Panc1 (cell line): ENCODE measurements at regions of chr3 and their contacts with region 1.

Region 1: DNA sequence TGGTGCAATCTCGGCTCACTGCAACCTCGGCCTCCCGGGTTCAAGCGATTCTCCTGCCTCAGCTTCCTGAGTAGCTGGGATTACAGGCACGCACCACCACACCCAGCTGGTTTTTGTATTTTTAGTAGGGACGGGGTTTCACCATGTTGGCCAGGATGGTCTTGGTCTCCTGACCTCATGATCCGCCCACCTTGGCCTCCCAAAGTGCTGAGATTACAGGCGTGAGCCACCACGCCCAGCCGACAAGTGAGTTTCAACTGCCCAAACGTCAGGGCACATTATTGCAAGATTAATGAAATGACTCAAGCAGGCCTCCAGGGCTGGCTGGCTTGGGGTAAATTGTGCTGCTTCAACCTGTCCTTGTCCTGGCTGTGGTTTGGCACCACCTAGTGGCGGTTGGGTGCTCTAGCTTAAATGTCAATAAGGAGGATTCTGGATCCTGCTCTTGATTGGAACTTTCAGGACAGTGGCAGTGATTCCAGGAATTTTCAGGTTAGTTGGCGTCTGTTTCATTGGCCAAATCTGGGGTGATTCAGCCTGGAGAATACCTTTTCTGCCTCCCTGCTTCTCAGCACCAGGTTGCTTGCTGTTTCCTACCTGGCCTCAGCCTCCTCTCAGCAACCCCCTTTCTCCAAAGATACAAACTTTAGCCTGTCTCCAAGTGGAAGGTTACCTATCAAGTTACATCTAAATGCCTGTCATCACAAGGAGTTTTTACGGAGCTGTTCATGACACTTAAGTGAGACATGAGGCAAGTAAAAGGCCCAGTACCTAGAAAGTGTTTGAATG is 32.4 kb upstream of the SACM1L start:
- DNase-seq: peak; percentile 74
- ATAC-seq: peak; percentile 89
- H3K4me3 ChIP-seq: no peak overlapping the region
- H3K27ac ChIP-seq: no peak overlapping the region; the same call in 1 of the 2 replicates
- H3K4me1 ChIP-seq: peaks cover 14% of the 10 kb centered on the region
- H3K27me3 ChIP-seq: no peaks in the 10 kb centered on the region
- CTCF ChIP-seq: peak; percentile 87

Region 2: GRCh38 chr3:45037734-45038455 is 618.9 kb before region 1 on chr3:
- CTCF ChIA-PET with region 1: interaction called, 6 read pairs
- POLR2A ChIA-PET with region 1: no interaction called
- in situ Hi-C with region 1: no loop called
- intact Hi-C with region 1: loop called (anchors 10 kb)
- DNase-seq: peak; percentile 90
- ATAC-seq: peak; percentile 93
- H3K4me3 ChIP-seq: peak overlapping the region; percentile 12 to 27; a peak in 2 of 4 replicates
- H3K27ac ChIP-seq: no peak overlapping the region
- H3K4me1 ChIP-seq: no peaks in the 10 kb centered on the region
- H3K27me3 ChIP-seq: no peaks in the 10 kb centered on the region
- CTCF ChIP-seq: peak; percentile 96

Region 3: DNA sequence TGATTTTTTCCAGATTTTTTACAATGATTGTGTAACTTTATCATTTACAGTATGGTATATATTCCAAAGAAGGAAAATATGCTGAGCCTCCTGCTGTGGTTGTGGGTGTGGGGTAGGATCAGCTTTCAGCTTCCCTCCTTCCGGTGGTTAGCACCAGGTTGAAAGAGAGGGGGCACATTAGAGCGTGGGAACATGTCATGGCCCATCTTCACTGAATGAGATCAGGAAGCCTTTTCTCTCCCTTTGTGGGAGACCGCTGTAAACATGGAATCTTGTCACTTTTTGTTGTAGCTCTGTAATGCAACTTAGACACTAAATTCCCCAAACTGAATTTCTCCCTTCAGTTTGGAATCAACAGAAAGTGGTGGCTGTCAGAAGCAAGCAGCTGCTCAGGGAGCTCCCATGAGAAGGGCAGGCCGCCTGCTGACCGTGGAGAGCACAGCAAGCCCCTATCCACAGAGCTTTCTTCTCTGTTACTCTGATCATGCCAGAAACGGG is 148.9 kb before region 1 on chr3:
- CTCF ChIA-PET with region 1: interaction called, 5 read pairs
- POLR2A ChIA-PET with region 1: no interaction called
- in situ Hi-C with region 1: no loop called
- intact Hi-C with region 1: loop called (anchors 5 kb)
- DNase-seq: no peak
- ATAC-seq: peak; percentile 73; the same call in 1 of the 2 replicates
- H3K4me3 ChIP-seq: no peak overlapping the region
- H3K27ac ChIP-seq: no peak overlapping the region
- H3K4me1 ChIP-seq: no peaks in the 10 kb centered on the region
- H3K27me3 ChIP-seq: no peaks in the 10 kb centered on the region
- CTCF ChIP-seq: peak; percentile 45

Region 4: GRCh38 chr3:45571971-45572370 is 84.8 kb before region 1 on chr3:
- CTCF ChIA-PET with region 1: interaction called, 15 read pairs
- POLR2A ChIA-PET with region 1: no interaction called
- in situ Hi-C with region 1: no loop called
- intact Hi-C with region 1: no loop called
- DNase-seq: no peak
- ATAC-seq: no peak
- H3K4me3 ChIP-seq: no peak overlapping the region
- H3K27ac ChIP-seq: no peak overlapping the region
- H3K4me1 ChIP-seq: no peaks in the 10 kb centered on the region
- H3K27me3 ChIP-seq: no peaks in the 10 kb centered on the region
- CTCF ChIP-seq: no peak

Region 5: GRCh38 chr3:45593708-45594609 is 62.8 kb before region 1 on chr3:
- CTCF ChIA-PET with region 1: interaction called, 17 read pairs
- POLR2A ChIA-PET with region 1: no interaction called
- in situ Hi-C with region 1: no loop called
- intact Hi-C with region 1: loop called (anchors 2 kb)
- DNase-seq: no peak
- ATAC-seq: peak; percentile 91
- H3K4me3 ChIP-seq: peak overlapping the region; percentile 65 to 68
- H3K27ac ChIP-seq: peak overlapping the region; percentile 93
- H3K4me1 ChIP-seq: peaks cover 12% of the 10 kb centered on the region
- H3K27me3 ChIP-seq: no peaks in the 10 kb centered on the region
- CTCF ChIP-seq: no peak

Region 6: GRCh38 chr3:45612918-45613602 is 43.7 kb before region 1 on chr3:
- CTCF ChIA-PET with region 1: interaction called, 11 read pairs
- POLR2A ChIA-PET with region 1: no interaction called
- in situ Hi-C with region 1: no loop called
- intact Hi-C with region 1: loop called (anchors 5 kb)
- DNase-seq: no peak
- ATAC-seq: no peak
- H3K4me3 ChIP-seq: no peak overlapping the region
- H3K27ac ChIP-seq: peak overlapping the region; percentile 66; the same call in 1 of the 2 replicates
- H3K4me1 ChIP-seq: peaks cover 49% of the 10 kb centered on the region
- H3K27me3 ChIP-seq: no peaks in the 10 kb centered on the region
- CTCF ChIP-seq: no peak